Panc1 (cell line): ENCODE measurements at regions of chr9 and their contacts with region 1.

Region 1: DNA sequence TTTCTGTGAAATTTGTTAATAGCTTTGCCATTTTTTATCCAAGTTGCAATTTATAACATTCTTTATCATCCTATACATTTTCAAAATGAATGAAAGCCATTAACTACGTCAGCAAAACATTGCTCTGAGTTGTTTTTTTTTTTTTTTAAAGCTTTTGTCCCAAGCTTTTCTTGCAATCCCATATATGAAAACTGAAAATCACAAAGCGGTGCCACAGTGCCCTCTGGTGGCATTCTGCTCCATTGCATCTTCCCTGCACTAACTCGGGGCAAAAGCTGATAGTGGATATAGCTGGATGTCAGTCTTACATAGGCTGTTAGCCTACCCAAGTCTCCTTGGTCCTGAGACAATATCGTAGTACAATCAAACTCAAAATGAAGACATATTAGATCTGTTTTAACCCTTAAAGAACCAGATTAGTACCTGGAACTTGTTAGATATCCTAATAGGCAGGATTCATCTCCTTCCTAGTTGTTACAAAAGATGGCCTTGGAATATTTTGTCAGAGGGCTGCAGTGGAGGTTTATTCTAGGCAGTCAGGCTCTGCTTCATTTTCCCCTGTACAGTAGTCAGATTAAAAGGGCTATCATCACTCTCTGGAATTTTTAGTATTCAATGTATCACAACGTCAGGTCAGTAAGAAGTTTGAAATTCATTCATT is 669.9 kb downstream of the PTPRD start:
- DNase-seq: peak; percentile 42
- ATAC-seq: no peak
- H3K4me3 ChIP-seq: no peak overlapping the region
- H3K27ac ChIP-seq: no peak overlapping the region
- H3K4me1 ChIP-seq: no peaks in the 10 kb centered on the region
- H3K27me3 ChIP-seq: no peaks in the 10 kb centered on the region
- CTCF ChIP-seq: peak; percentile 67

Region 2: GRCh38 chr9:9246726-9247125 is 696.2 kb before region 1 on chr9:
- CTCF ChIA-PET with region 1: no interaction called
- POLR2A ChIA-PET with region 1: no interaction called
- in situ Hi-C with region 1: no loop called
- intact Hi-C with region 1: no loop called
- DNase-seq: no peak
- ATAC-seq: no peak
- H3K4me3 ChIP-seq: no peak overlapping the region
- H3K27ac ChIP-seq: no peak overlapping the region
- H3K4me1 ChIP-seq: no peaks in the 10 kb centered on the region
- H3K27me3 ChIP-seq: no peaks in the 10 kb centered on the region
- CTCF ChIP-seq: no peak

Region 3: GRCh38 chr9:9804109-9804508 is 138.8 kb before region 1 on chr9:
- CTCF ChIA-PET with region 1: interaction called, 12 read pairs
- POLR2A ChIA-PET with region 1: no interaction called
- in situ Hi-C with region 1: no loop called
- intact Hi-C with region 1: no loop called
- DNase-seq: no peak
- ATAC-seq: no peak
- H3K4me3 ChIP-seq: no peak overlapping the region
- H3K27ac ChIP-seq: no peak overlapping the region
- H3K4me1 ChIP-seq: no peaks in the 10 kb centered on the region
- H3K27me3 ChIP-seq: no peaks in the 10 kb centered on the region
- CTCF ChIP-seq: no peak

Region 4: GRCh38 chr9:9893822-9894221 is 49.1 kb before region 1 on chr9:
- CTCF ChIA-PET with region 1: no interaction called
- POLR2A ChIA-PET with region 1: no interaction called
- in situ Hi-C with region 1: no loop called
- intact Hi-C with region 1: no loop called
- DNase-seq: no peak
- ATAC-seq: no peak
- H3K4me3 ChIP-seq: no peak overlapping the region
- H3K27ac ChIP-seq: no peak overlapping the region
- H3K4me1 ChIP-seq: no peaks in the 10 kb centered on the region
- H3K27me3 ChIP-seq: no peaks in the 10 kb centered on the region
- CTCF ChIP-seq: no peak